Dorsolateral prefrontal cortex (tissue), 120 donors: ENCODE measurements at regions of chr1 and their contacts with region 1.

Region 1: GRCh38 chr1:7224644-7225043 is 439.4 kb downstream of the CAMTA1 start:
- DNase-seq: no peak
- H3K4me3 ChIP-seq: no peak overlapping the region
- H3K27ac ChIP-seq: no peak overlapping the region
- H3K27me3 ChIP-seq: no peaks in the 10 kb centered on the region
- CTCF ChIP-seq: no peak

Region 2: DNA sequence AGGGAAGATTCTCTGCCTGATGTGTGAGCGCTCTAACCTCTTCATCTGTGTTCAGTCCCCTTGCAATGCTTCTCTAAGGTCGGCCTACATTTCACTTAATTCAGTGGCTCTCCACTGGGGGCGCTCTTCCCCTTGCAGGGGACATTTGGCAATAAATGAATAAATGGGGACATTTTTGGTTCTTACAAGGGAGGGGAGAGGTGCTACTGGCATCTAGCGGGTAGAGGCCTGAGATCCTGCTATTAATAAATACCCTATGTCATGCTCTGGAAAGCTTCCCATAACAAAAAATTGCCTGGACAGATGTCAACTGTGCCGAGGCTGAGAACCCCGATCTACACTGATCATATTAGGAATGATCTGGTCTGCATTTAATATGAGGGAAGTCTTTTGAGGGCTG is 497.1 kb before region 1 on chr1:
- intact Hi-C with region 1: loop called in 1 of 2 experiments (anchors 10 kb)
- DNase-seq: peak in 1 of 10 donors; percentile 19
- H3K4me3 ChIP-seq: no peak overlapping the region
- H3K27ac ChIP-seq: no peak overlapping the region
- H3K27me3 ChIP-seq: no peaks in the 10 kb centered on the region
- CTCF ChIP-seq: peak; percentile 49 to 88 (median 74)

Region 3: DNA sequence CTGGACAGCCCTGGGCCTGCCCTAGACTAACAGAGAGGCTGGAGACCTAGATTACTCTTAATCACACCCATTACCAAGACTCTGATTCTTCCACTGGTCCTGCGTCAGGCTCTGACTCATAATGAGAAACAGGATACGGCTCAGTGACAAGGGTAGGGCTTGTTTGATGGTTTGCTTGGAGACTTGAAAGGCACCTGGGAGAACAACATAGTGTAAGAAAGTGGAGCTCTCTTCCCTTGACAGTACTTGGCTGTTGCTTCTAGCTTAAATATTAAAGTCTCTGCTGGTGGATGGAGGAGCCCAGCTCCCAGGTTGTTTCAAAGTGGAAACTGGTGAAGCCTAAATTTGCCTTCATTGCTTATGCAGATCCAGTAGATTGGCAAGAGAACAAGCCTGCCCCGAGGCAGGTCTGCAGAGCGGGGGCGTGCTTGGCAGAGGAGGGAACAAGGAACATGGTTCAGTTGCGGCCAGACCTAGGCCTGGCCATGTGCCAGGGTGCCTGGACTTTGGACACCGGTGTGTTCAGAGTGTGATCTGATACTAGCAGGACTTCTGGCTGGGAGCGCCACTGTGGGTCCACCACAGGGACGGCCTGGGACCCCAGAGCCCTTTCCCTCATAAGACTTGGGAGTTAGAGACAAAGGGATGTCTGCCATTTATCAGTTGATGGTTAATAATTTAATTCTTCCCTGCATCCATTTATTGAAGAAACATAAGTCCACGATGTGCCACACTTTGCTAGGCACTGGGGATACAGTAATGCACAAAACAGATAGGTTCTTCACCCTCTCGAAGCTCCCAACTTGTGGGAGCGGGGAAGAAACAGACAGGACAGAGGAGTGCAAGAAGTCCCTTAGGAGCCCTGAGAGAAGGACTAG is 41.4 kb after region 1 on chr1:
- intact Hi-C with region 1: no loop called
- DNase-seq: peak in 1 of 10 donors; percentile 53
- H3K4me3 ChIP-seq: no peak overlapping the region
- H3K27ac ChIP-seq: no peak overlapping the region
- H3K27me3 ChIP-seq: no peaks in the 10 kb centered on the region
- CTCF ChIP-seq: no peak